ENCODE measurements at regions of chr9 and their contacts with region 1.

Region 1: GRCh38 chr9:129761901-129762364 is 9.1 kb upstream of the PTGES start:
- DNase-seq: no peak
- H3K4me3 ChIP-seq: no peak overlapping the region
- H3K27ac ChIP-seq: peak overlapping the region in 1 of 2 donors; percentile 46
- H3K4me1 ChIP-seq: peaks cover 8% of the 10 kb centered on the region
- H3K27me3 ChIP-seq: no peaks in the 10 kb centered on the region
- CTCF ChIP-seq: no peak
- EP300 ChIP-seq: no peak
- POLR2A ChIP-seq: no peak

Region 2: GRCh38 chr9:129712634-129713401 is 49.1 kb before region 1 on chr9:
- intact Hi-C with region 1: loop called in 1 of 4 experiments (anchors 5 kb)
- DNase-seq: no peak
- H3K4me3 ChIP-seq: no peak overlapping the region
- H3K27ac ChIP-seq: peak overlapping the region; percentile 8
- H3K4me1 ChIP-seq: peaks cover 10% of the 10 kb centered on the region
- H3K27me3 ChIP-seq: no peaks in the 10 kb centered on the region
- CTCF ChIP-seq: no peak
- EP300 ChIP-seq: no peak
- POLR2A ChIP-seq: no peak

Region 3: GRCh38 chr9:129962889-129963703 is 201.2 kb after region 1 on chr9:
- intact Hi-C with region 1: no loop called
- DNase-seq: peak in 2 of 5 donors; percentile 26 to 41
- H3K4me3 ChIP-seq: peak overlapping the region; percentile 32
- H3K27ac ChIP-seq: peak overlapping the region; percentile 67 to 76
- H3K4me1 ChIP-seq: peaks cover 7% of the 10 kb centered on the region
- H3K27me3 ChIP-seq: no peaks in the 10 kb centered on the region
- CTCF ChIP-seq: no peak
- EP300 ChIP-seq: no peak
- POLR2A ChIP-seq: peak; percentile 5

Region 4: DNA sequence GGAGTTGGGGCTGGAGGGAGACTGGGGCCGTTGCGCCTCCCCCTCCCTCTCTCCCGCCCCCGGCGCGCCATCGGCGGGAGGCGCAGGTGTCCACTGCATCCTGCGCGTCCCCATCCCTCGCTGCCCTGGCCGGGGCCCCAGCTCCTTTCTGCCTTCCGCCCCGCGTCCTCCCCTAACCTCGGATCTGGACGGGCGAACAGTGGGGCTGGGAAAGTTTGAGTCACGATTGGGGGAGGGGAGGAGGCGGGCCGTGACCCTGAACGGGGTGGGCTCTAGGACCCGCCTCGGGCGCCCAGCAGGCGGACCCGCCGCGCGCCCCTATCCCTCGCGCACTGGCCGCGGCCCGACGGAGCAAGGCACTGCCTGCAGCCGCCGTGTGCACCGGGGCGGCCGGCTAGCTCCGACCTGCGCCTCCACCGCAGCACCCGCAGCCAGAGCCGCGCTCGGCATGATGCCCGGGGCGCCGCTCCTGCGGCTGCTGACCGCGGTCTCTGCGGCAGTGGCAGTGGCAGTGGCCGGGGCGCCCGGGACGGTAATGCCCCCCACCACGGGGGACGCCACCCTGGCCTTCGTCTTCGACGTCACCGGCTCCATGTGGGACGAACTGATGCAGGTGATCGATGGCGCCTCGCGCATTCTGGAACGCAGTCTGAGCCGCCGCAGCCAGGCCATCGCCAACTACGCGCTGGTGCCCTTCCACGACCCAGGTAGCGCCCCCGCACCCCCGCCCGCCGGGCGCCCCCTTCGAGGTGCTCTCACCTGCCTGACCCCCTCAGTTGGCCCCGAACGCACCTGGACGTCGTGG is 503.7 kb after region 1 on chr9 and contains the start of gene HMCN2:
- intact Hi-C with region 1: no loop called
- DNase-seq: no peak
- H3K4me3 ChIP-seq: peak within 1 kb of the TSS; percentile 24
- H3K27ac ChIP-seq: no peak within 1 kb of the TSS
- H3K4me1 ChIP-seq: no peaks in the 10 kb centered on the region
- H3K27me3 ChIP-seq: no peaks in the 10 kb centered on the region
- CTCF ChIP-seq: no peak
- EP300 ChIP-seq: no peak
- POLR2A ChIP-seq: no peak
- total RNA-seq, gene HMCN2: 0.12 to 4.2 (median 0.96) TPM